Natural killer cell (primary cell): ENCODE measurements at regions of chr20 and their contacts with region 1.

Region 1: DNA sequence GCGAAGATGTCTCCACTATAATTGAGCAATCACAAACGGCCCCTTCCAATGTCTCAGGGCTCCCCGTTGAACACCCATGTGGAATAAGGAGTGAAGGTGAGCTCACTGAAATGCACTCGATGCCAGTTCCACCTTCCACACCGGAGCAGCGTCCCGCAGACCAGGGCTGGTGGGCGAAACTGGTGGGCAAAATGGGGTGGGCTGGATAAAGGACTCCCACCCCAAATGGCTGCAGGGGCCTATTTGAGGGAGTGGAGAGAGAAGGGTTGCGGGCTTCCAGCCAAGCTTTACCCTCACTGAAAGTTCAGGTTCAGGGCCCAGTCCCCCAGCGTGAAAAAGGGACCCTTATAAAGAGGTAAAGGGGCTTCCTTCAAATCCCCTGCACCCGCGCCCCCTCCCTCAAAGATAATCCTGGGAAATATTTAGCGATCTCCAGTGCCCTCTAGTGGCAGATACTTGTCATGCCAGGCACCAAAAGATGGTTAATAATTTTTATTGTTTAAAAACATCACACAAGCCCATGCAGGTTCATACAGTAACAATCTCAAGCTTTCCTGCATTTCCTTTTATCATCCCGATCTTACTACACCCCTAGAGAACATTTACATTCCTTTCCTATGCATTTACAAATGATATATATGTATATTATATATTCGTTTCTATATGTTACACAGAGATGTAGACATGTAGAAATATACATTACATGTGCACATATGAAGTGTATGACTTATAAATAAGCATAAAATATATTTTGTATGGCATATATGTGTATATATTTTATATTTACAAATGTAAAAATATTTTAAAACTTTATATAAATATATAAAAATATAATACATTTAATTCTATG is 58.2 kb upstream of the NKX2-2 start:
- DNase-seq: peak in 1 of 2 donors; percentile 55
- ATAC-seq: peak in 1 of 3 donors; percentile 36
- H3K4me3 ChIP-seq: no peak overlapping the region
- H3K4me3 Mint-ChIP-seq: no peak overlapping the region
- H3K27ac ChIP-seq: no peak overlapping the region
- H3K27ac Mint-ChIP-seq: no peak overlapping the region
- H3K4me1 ChIP-seq: no peaks in the 10 kb centered on the region
- H3K4me1 Mint-ChIP-seq: no peaks in the 10 kb centered on the region
- H3K27me3 ChIP-seq: no peaks in the 10 kb centered on the region
- H3K27me3 Mint-ChIP-seq: peaks cover 0 to 11% of the 10 kb centered on the region in 2 donors
- CTCF ChIP-seq: peak; percentile 87

Region 2: GRCh38 chr20:20860078-20860806 is 711.8 kb before region 1 on chr20:
- intact Hi-C with region 1: loop called (anchors 1 kb)
- DNase-seq: peak; percentile 72 to 83
- ATAC-seq: peak; percentile 59 to 87 (median 66)
- H3K4me3 ChIP-seq: no peak overlapping the region
- H3K4me3 Mint-ChIP-seq: no peak overlapping the region
- H3K27ac ChIP-seq: no peak overlapping the region
- H3K27ac Mint-ChIP-seq: no peak overlapping the region
- H3K4me1 ChIP-seq: no peaks in the 10 kb centered on the region
- H3K4me1 Mint-ChIP-seq: no peaks in the 10 kb centered on the region
- H3K27me3 ChIP-seq: no peaks in the 10 kb centered on the region
- H3K27me3 Mint-ChIP-seq: peaks cover 7 to 23% of the 10 kb centered on the region in 2 donors
- CTCF ChIP-seq: peak; percentile 92

Region 3: GRCh38 chr20:21235484-21236445 is 336.3 kb before region 1 on chr20:
- intact Hi-C with region 1: loop called (anchors 1 kb)
- DNase-seq: peak; percentile 33 to 77
- ATAC-seq: peak; percentile 73 to 81 (median 74)
- H3K4me3 ChIP-seq: no peak overlapping the region
- H3K4me3 Mint-ChIP-seq: no peak overlapping the region
- H3K27ac ChIP-seq: no peak overlapping the region
- H3K27ac Mint-ChIP-seq: no peak overlapping the region
- H3K4me1 ChIP-seq: peaks cover 4% of the 10 kb centered on the region
- H3K4me1 Mint-ChIP-seq: peaks cover 4 to 6% of the 10 kb centered on the region in 2 donors
- H3K27me3 ChIP-seq: no peaks in the 10 kb centered on the region
- H3K27me3 Mint-ChIP-seq: no peaks in the 10 kb centered on the region
- CTCF ChIP-seq: peak; percentile 83

Region 4: DNA sequence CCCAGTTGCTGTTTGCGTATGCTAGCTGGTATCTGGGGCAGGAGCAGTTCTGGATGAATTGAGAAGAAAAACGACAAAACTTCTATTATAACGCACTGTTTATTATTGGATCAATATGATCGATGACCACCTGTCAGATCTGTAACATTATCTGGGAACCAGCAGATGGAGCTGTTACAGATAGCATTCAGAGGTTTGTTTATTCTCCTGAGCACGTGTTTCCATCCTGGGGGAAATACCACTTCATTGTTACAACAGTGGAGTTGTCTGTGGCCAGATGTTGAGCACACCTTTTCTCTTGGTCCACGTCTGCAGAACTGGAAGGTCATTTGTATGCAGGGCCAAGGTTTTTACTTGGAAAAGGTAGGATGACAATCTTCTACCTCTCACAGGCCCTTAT is 42.2 kb before region 1 on chr20:
- intact Hi-C with region 1: no loop called
- DNase-seq: peak in 1 of 2 donors; percentile 59
- ATAC-seq: no peak
- H3K4me3 ChIP-seq: no peak overlapping the region
- H3K4me3 Mint-ChIP-seq: no peak overlapping the region
- H3K27ac ChIP-seq: no peak overlapping the region
- H3K27ac Mint-ChIP-seq: no peak overlapping the region
- H3K4me1 ChIP-seq: no peaks in the 10 kb centered on the region
- H3K4me1 Mint-ChIP-seq: no peaks in the 10 kb centered on the region
- H3K27me3 ChIP-seq: peaks cover under 1% of the 10 kb centered on the region
- H3K27me3 Mint-ChIP-seq: peaks cover 34 to 84% of the 10 kb centered on the region in 2 donors
- CTCF ChIP-seq: no peak